MCF 10A (cell line): ENCODE measurements at regions of chr2 and their contacts with region 1.

Region 1: DNA sequence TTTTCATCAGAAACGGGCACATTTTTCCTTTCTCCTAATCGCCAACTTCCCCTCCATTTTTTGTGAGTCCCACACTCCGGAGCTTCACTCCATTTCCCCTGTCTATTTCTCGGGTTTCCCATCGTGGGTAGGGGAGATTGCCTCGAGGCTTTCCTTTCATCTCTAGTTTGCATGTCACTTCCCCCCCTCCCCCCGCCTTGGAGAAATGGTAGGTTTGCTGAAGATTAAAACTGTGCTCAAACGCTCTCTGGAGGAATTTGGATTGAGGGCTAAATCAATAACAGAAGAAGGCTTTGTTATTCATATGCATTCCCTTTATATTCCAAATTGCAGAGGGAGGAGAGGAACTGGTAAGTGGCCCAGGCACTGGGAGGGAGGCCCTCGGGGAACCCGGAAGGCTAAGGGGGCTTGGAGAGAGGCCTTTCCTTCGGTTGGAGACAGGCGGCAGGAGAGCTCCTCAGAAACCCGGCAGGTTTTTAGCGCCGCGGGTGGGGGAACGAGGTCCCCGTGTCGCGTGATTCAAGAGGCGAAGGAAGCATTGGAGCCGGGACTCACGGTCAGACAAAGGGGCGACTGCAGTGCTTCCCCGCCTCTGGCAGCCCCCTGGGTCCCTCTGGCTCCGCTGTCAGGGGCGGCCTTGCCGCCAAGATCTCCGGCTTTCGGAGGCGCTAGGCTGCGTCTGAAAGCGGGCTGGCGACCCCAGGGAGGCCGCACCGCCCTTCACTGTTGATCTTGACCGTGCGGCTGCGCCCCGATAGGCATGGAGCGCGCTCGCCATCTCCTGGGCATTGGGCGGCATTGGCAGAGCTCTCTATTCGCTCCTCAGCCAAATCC is 2.4 kb upstream of the HOXD12 start:
- DNase-seq: peak; percentile 89
- H3K4me3 Mint-ChIP-seq: peak overlapping the region; percentile 77
- H3K27ac Mint-ChIP-seq: peak overlapping the region; percentile 71
- H3K4me1 Mint-ChIP-seq: peaks cover 13% of the 10 kb centered on the region
- H3K27me3 Mint-ChIP-seq: peaks cover 47% of the 10 kb centered on the region
- CTCF ChIP-seq: peak; percentile 92

Region 2: DNA sequence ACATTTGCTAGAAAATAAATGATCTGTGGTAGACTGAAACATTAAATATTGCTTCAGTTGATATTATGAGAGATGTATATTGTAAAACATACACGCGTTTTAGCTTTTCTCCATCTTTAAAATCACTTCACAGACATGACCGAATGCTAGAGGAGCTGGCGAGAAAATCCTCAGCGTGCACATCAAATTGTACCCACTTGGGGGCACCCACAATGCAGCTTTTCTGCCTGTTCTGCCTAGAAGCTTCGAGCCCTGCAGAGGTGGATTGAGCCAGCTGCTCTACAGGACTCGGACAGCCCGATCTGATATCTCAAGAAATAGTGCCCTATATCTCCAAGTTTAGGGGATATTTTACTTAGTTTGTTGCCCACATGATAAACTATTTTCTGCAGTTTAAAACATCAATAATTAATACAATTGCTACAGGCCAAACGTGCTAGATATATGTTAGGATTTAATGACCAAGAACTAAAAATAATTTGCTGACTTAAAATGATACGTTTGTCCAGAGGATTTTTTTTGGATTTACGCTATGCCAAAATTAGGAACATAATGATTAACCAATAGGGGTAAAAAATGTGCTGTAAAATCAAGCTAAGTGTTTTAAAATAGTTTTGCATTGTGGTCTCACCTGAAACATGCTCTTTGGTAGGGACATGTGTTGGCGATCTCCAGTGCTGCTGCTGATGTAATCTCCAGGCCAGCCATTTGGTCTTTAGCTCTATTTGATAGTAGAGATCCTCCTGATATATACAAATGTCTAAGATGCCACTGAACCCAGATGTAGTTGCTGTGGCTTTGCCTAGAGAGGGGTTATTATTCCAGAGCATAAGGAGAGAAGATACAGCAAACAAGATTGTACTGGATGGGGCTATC is 893.3 kb before region 1 on chr2:
- CTCF ChIA-PET with region 1: interaction called, 4 read pairs
- POLR2A ChIA-PET with region 1: interaction called, 4 read pairs
- intact Hi-C with region 1: loop called (anchors 1 kb)
- DNase-seq: peak; percentile 75
- H3K4me3 Mint-ChIP-seq: no peak overlapping the region
- H3K27ac Mint-ChIP-seq: no peak overlapping the region
- H3K4me1 Mint-ChIP-seq: no peaks in the 10 kb centered on the region
- H3K27me3 Mint-ChIP-seq: peaks cover 34% of the 10 kb centered on the region
- CTCF ChIP-seq: peak; percentile 48

Region 3: DNA sequence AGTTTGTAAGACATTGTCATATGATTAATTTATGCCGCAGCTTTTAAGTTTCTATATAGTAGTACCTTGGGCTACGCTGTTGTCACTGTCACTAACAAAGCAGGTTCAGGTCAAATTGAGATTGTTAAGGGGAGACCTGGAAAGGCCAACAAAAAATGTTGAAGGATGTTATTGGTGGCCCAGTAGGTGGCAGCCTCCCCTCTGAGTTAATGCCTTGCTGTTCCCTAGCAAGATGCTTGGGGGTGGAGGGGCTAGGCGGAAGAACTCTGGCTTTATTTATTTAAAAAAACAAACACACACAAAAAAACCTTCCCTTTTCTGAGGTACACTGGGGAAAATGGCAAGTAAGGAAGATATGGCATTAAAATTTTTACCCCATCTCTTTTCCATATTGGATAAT is 787.4 kb before region 1 on chr2:
- CTCF ChIA-PET with region 1: interaction called, 15 read pairs
- POLR2A ChIA-PET with region 1: interaction called, 5 read pairs
- intact Hi-C with region 1: loop called (anchors 2 kb)
- DNase-seq: peak; percentile 47
- H3K4me3 Mint-ChIP-seq: no peak overlapping the region
- H3K27ac Mint-ChIP-seq: no peak overlapping the region
- H3K4me1 Mint-ChIP-seq: peaks cover 5% of the 10 kb centered on the region
- H3K27me3 Mint-ChIP-seq: peaks cover 75% of the 10 kb centered on the region
- CTCF ChIP-seq: peak; percentile 33

Region 4: DNA sequence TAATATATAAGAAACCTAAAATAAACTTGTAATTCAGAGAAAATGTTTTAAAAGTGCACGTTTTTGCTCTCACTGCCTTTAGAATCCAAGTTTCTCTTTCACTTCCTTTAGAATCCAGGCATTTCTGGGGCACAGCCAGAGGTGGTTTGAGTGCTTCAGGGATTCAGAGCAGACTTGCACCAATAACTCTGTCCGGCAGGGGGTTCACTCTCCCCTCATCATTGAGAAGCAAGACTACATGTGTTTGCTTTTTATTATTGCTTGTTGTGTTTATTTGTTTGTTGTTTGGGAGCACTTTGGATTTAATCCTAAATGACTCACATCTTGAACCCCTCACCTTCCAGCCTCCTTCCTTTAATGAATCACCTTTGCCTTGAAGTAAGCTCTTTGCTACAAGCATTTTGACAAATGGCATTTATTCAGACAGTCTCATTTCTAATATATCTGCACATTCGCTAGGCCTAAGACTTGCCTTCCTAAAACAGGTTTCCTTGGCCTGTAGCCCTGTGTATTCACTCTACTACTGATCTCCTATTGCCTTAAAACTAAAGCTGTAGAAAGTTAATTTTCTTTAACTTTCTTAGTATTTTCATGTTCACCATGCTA is 682.2 kb before region 1 on chr2:
- CTCF ChIA-PET with region 1: no interaction called
- POLR2A ChIA-PET with region 1: no interaction called
- intact Hi-C with region 1: loop called (anchors 1 kb)
- DNase-seq: peak; percentile 87
- H3K4me3 Mint-ChIP-seq: no peak overlapping the region
- H3K27ac Mint-ChIP-seq: no peak overlapping the region
- H3K4me1 Mint-ChIP-seq: peaks cover 6% of the 10 kb centered on the region
- H3K27me3 Mint-ChIP-seq: no peaks in the 10 kb centered on the region
- CTCF ChIP-seq: peak; percentile 66

Region 5: GRCh38 chr2:176110975-176111663 is 13.9 kb after region 1 on chr2:
- CTCF ChIA-PET with region 1: interaction called, 21 read pairs
- POLR2A ChIA-PET with region 1: interaction called, 4 read pairs
- intact Hi-C with region 1: no loop called
- DNase-seq: peak; percentile 58
- H3K4me3 Mint-ChIP-seq: no peak overlapping the region
- H3K27ac Mint-ChIP-seq: no peak overlapping the region
- H3K4me1 Mint-ChIP-seq: peaks cover 4% of the 10 kb centered on the region
- H3K27me3 Mint-ChIP-seq: peaks cover 8% of the 10 kb centered on the region
- CTCF ChIP-seq: peak; percentile 56